CD8-positive, alpha-beta memory T cell (primary cell): ENCODE measurements at regions of chr12 and their contacts with region 1.

Region 1: GRCh38 chr12:48851883-48852733 is at the start of gene DDX23:
- DNase-seq: peak; percentile 87 to 94 (median 89)
- H3K4me3 ChIP-seq: peak within 1 kb of the TSS; percentile 87
- H3K4me3 Mint-ChIP-seq: peak within 1 kb of the TSS; percentile 89 to 99 (median 97)
- H3K27ac ChIP-seq: peak within 1 kb of the TSS; percentile 98
- H3K27ac Mint-ChIP-seq: peak within 1 kb of the TSS; percentile 91 to 99 (median 96)
- H3K4me1 ChIP-seq: peaks cover 27% of the 10 kb centered on the region
- H3K4me1 Mint-ChIP-seq: peaks cover 34 to 46% (median 45%) of the 10 kb centered on the region in 3 donors
- H3K27me3 ChIP-seq: no peaks in the 10 kb centered on the region
- H3K27me3 Mint-ChIP-seq: peaks cover 0 to 4% of the 10 kb centered on the region in 2 donors
- total RNA-seq, gene DDX23: 147 to 148 TPM

Region 2: DNA sequence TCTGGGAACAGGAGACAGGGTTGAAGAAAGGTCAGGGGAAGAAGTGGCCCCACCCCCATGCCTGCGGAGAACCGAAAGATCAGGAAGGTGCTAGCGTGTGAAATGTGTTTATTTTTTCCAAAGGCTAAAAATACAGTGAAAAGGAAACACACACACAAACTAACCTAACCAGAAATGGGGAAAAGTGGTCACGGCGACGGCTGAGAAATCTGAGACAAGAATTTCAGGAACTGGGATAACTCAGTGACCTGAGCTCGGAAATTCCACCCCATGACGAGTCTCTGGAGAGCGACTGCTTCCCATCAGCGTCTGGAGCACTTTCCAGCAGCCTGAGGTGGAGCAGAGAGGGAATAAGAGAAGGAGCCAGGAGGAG is 30.2 kb after region 1 on chr12:
- CTCF ChIA-PET with region 1: interaction called, 10 read pairs
- POLR2A ChIA-PET with region 1: interaction called, 12 read pairs
- DNase-seq: no peak
- H3K4me3 ChIP-seq: no peak overlapping the region
- H3K4me3 Mint-ChIP-seq: peak overlapping the region in 1 of 7 donors; percentile 10
- H3K27ac ChIP-seq: no peak overlapping the region
- H3K27ac Mint-ChIP-seq: no peak overlapping the region
- H3K4me1 ChIP-seq: no peaks in the 10 kb centered on the region
- H3K4me1 Mint-ChIP-seq: peaks cover 0 to 2% (median 0%) of the 10 kb centered on the region in 3 donors
- H3K27me3 ChIP-seq: peaks cover 4% of the 10 kb centered on the region
- H3K27me3 Mint-ChIP-seq: peaks cover 12 to 30% of the 10 kb centered on the region in 2 donors

Region 3: DNA sequence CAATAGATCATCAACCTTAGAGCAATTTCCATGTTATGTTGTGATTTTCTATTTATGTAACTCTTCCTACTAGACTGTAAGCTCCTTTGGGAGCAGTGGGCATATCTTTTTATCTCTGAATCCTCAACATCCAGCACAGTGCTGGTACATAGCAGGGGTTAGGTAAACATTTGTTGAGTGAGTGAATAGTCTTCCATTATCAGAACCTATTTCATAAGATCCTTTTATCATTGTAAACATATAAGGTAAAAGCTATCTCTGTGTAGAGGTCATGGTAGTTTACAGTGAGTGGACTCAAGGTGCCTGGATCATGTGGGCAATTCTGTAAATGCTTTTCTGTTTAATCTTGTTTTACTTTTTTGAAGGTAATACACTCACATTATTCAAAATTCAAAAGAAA is 58.1 kb after region 1 on chr12:
- CTCF ChIA-PET with region 1: interaction called, 11 read pairs
- POLR2A ChIA-PET with region 1: no interaction called
- DNase-seq: no peak
- H3K4me3 ChIP-seq: no peak overlapping the region
- H3K4me3 Mint-ChIP-seq: no peak overlapping the region
- H3K27ac ChIP-seq: no peak overlapping the region
- H3K27ac Mint-ChIP-seq: no peak overlapping the region
- H3K4me1 ChIP-seq: no peaks in the 10 kb centered on the region
- H3K4me1 Mint-ChIP-seq: no peaks in the 10 kb centered on the region
- H3K27me3 ChIP-seq: no peaks in the 10 kb centered on the region
- H3K27me3 Mint-ChIP-seq: no peaks in the 10 kb centered on the region

Region 4: GRCh38 chr12:48936379-48936979 is 84.4 kb after region 1 on chr12:
- CTCF ChIA-PET with region 1: interaction called, 52 read pairs
- POLR2A ChIA-PET with region 1: interaction called, 11 read pairs
- DNase-seq: peak; percentile 75 to 88 (median 82)
- H3K4me3 ChIP-seq: no peak overlapping the region
- H3K4me3 Mint-ChIP-seq: no peak overlapping the region
- H3K27ac ChIP-seq: no peak overlapping the region
- H3K27ac Mint-ChIP-seq: peak overlapping the region; percentile 38 to 98 (median 96)
- H3K4me1 ChIP-seq: peaks cover 33% of the 10 kb centered on the region
- H3K4me1 Mint-ChIP-seq: peaks cover 36 to 49% (median 42%) of the 10 kb centered on the region in 3 donors
- H3K27me3 ChIP-seq: no peaks in the 10 kb centered on the region
- H3K27me3 Mint-ChIP-seq: no peaks in the 10 kb centered on the region

Region 5: DNA sequence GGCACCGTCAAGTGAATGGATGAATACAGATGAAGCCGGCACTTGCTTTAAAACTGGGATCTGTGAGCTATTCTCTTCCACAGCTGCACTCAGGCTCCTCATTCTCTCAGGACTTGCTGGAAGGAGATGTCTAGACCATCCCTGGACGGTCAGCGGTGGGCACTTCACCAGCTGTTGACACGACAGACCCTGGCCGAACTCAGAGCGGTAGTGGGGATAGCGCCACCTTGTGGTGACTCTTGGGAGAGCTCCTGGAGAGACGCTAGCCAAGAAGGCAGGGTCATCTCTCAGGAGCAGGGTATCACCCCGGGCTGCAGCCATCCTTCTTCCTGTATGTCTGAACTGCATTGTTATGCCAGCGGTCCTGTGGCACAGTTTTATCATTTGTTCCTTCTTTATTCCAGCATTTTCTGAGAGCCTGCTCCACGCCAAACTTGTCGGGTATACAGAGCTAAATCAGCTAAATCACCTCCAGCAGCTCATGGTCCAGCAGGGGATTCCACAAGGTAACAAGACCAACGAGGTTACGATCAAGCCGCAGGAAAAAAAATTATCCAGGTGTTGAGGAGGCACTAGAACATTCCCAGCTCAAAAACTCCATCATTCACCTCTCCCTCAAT is 136.0 kb after region 1 on chr12:
- CTCF ChIA-PET with region 1: interaction called, 33 read pairs
- POLR2A ChIA-PET with region 1: interaction called, 3 read pairs
- DNase-seq: peak; percentile 61 to 82 (median 68)
- H3K4me3 ChIP-seq: no peak overlapping the region
- H3K4me3 Mint-ChIP-seq: peak overlapping the region in 1 of 7 donors; percentile 3
- H3K27ac ChIP-seq: no peak overlapping the region
- H3K27ac Mint-ChIP-seq: peak overlapping the region in 5 of 8 donors; percentile 32 to 90 (median 66)
- H3K4me1 ChIP-seq: no peaks in the 10 kb centered on the region
- H3K4me1 Mint-ChIP-seq: peaks cover 6 to 11% (median 9%) of the 10 kb centered on the region in 3 donors
- H3K27me3 ChIP-seq: no peaks in the 10 kb centered on the region
- H3K27me3 Mint-ChIP-seq: peaks cover 25 to 31% of the 10 kb centered on the region in 2 donors